Mammary epithelial cell (primary cell): ENCODE measurements at regions of chr2 and their contacts with region 1.

Region 1: GRCh38 chr2:121530212-121530705 is 421 bp upstream of the RNU4ATAC start:
- DNase-seq: peak; percentile 81
- H3K4me3 ChIP-seq: peak overlapping the region; percentile 54 to 90 (median 70)
- H3K27ac ChIP-seq: peak overlapping the region; percentile 98
- H3K4me1 ChIP-seq: peaks cover 60% of the 10 kb centered on the region
- H3K27me3 ChIP-seq: no peaks in the 10 kb centered on the region
- CTCF ChIP-seq: no peak

Region 2: GRCh38 chr2:121085801-121086200 is 444.5 kb before region 1 on chr2:
- CTCF ChIA-PET with region 1: no interaction called
- dilution Hi-C with region 1: no loop called
- in situ Hi-C with region 1: no loop called
- intact Hi-C with region 1: loop called (anchors 2 kb)
- DNase-seq: no peak
- H3K4me3 ChIP-seq: no peak overlapping the region
- H3K27ac ChIP-seq: no peak overlapping the region
- H3K4me1 ChIP-seq: peaks cover 2% of the 10 kb centered on the region
- H3K27me3 ChIP-seq: no peaks in the 10 kb centered on the region
- CTCF ChIP-seq: no peak

Region 3: GRCh38 chr2:121446647-121447241 is 83.5 kb before region 1 on chr2:
- CTCF ChIA-PET with region 1: no interaction called
- dilution Hi-C with region 1: no loop called
- in situ Hi-C with region 1: no loop called
- intact Hi-C with region 1: loop called (anchors 5 kb)
- DNase-seq: peak; percentile 17
- H3K4me3 ChIP-seq: no peak overlapping the region
- H3K27ac ChIP-seq: no peak overlapping the region
- H3K4me1 ChIP-seq: no peaks in the 10 kb centered on the region
- H3K27me3 ChIP-seq: no peaks in the 10 kb centered on the region
- CTCF ChIP-seq: no peak

Region 4: GRCh38 chr2:121489284-121489683 is 41.0 kb before region 1 on chr2:
- CTCF ChIA-PET with region 1: no interaction called
- dilution Hi-C with region 1: loop called (anchors 5 kb)
- in situ Hi-C with region 1: no loop called
- intact Hi-C with region 1: loop called (anchors 5 kb)
- DNase-seq: peak; percentile 72
- H3K4me3 ChIP-seq: peak overlapping the region in 1 of 3 experiments; percentile 38
- H3K27ac ChIP-seq: peak overlapping the region; percentile 18
- H3K4me1 ChIP-seq: peaks cover 61% of the 10 kb centered on the region
- H3K27me3 ChIP-seq: no peaks in the 10 kb centered on the region
- CTCF ChIP-seq: no peak

Region 5: DNA sequence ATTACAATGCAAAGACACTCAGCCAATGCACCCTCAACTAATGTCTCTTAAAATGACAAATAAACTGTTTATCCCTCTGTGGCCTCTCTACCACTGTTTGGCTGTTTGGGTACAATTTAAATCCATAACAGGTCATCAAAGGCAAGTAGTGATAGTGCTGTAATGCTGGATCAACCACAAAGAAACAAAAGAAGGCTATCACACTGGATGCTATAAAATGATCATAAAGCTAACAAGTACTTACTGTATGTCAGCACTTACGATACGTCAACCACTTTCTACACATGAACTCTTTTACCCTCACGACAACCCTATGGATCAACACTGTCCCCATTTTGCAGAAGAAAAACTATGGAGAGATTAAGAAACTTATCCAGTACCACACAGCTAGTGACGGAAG is 54.5 kb after region 1 on chr2:
- CTCF ChIA-PET with region 1: no interaction called
- dilution Hi-C with region 1: no loop called
- in situ Hi-C with region 1: no loop called
- intact Hi-C with region 1: no loop called
- DNase-seq: no peak
- H3K4me3 ChIP-seq: no peak overlapping the region
- H3K27ac ChIP-seq: no peak overlapping the region
- H3K4me1 ChIP-seq: peaks cover 16% of the 10 kb centered on the region
- H3K27me3 ChIP-seq: no peaks in the 10 kb centered on the region
- CTCF ChIP-seq: no peak

Region 6: DNA sequence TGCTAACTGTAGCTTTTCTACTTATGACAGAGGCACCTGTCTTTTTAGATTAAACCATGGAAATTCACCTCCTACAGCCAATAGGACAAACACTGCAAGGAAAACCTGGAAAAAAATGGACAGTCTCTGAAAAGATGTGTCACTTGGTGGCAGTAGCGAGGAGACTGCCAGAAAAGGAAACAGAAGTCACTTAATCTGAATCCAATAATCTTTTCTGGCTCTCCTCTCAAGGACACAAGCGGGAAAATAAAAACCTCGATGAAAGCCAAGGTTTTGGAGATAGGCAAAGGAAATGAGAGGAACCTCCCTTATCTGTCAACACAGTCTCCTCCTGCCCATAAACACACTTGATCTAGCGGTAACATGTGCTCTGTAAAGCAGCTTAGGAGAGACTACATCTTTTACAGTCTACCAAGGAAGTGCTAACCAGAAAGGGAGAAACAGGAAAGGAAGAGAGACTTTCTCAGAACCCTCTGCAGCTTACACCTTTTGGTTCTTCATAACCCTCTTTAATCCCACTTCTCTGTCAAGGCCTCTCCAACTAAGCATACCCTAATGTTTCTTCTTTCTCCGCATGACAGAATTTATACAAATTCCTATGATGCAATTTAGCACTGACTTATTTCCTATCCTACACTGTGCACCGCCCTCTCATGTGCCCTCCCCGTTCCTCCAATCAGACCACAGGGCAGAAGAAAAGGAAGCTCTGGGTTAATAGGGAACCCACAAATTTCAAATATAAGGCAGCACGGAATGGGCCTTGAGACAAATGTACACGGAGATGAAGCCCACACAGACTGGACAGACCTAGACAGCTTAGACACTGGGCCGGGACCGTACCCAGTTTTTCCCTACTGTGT is 66.2 kb after region 1 on chr2:
- CTCF ChIA-PET with region 1: no interaction called
- dilution Hi-C with region 1: no loop called
- in situ Hi-C with region 1: no loop called
- intact Hi-C with region 1: loop called (anchors 5 kb)
- DNase-seq: peak; percentile 36
- H3K4me3 ChIP-seq: no peak overlapping the region
- H3K27ac ChIP-seq: no peak overlapping the region
- H3K4me1 ChIP-seq: peaks cover 18% of the 10 kb centered on the region
- H3K27me3 ChIP-seq: no peaks in the 10 kb centered on the region
- CTCF ChIP-seq: peak; percentile 17 to 66

Region 7: GRCh38 chr2:121649596-121650314 is 119.5 kb after region 1 on chr2:
- CTCF ChIA-PET with region 1: interaction called, 3 read pairs
- dilution Hi-C with region 1: no loop called
- in situ Hi-C with region 1: no loop called
- intact Hi-C with region 1: loop called (anchors 1 kb)
- DNase-seq: peak; percentile 96
- H3K4me3 ChIP-seq: peak overlapping the region; percentile 42 to 80 (median 67)
- H3K27ac ChIP-seq: peak overlapping the region; percentile 86
- H3K4me1 ChIP-seq: peaks cover 16% of the 10 kb centered on the region
- H3K27me3 ChIP-seq: no peaks in the 10 kb centered on the region
- CTCF ChIP-seq: no peak

Region 8: GRCh38 chr2:121722479-121722878 is 192.2 kb after region 1 on chr2:
- CTCF ChIA-PET with region 1: no interaction called
- dilution Hi-C with region 1: loop called (anchors 5 kb)
- in situ Hi-C with region 1: loop called in 1 of 2 experiments (anchors 5 kb)
- intact Hi-C with region 1: loop called (anchors 1 kb)
- DNase-seq: peak; percentile 82
- H3K4me3 ChIP-seq: no peak overlapping the region
- H3K27ac ChIP-seq: peak overlapping the region; percentile 80
- H3K4me1 ChIP-seq: peaks cover 12% of the 10 kb centered on the region
- H3K27me3 ChIP-seq: no peaks in the 10 kb centered on the region
- CTCF ChIP-seq: no peak